ENCODE measurements at regions of chr11 and their contacts with region 1.

Region 1: DNA sequence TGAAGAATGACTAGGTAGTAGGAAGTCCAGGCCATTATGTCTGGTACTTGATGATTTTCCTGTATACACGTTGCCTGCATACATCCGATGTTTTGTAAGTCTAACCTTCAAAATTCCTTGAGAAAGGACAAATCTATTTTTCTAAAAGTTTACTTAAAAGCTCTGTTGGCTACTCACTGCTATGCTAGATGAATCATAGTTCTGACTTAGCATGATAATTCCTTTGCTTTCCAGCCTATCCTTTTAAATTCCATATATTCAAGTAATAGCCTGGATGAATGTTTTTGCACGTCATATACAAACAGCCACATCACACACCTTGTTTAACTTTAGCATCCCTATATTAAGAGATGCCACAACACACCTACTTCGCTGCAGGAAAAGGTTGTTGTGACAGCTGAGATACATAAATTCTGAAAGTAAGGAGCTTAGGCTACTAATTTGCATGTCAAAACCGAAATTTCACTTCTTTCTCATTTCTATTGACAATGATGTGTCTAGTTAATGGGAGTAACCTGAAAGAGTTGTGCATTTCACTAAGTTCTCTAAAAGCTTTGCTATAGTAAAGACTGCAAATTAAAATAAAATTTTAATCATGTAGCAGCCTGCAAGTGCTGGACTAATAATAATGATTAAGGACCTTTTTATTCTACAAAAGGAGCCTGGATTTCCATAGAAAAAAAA is 1116.4 kb downstream of the JRKL start:
- DNase-seq: no peak
- ATAC-seq: no peak
- H3K4me3 ChIP-seq: no peak overlapping the region
- H3K4me3 Mint-ChIP-seq: no peak overlapping the region
- H3K27ac ChIP-seq: no peak overlapping the region
- H3K27ac Mint-ChIP-seq: no peak overlapping the region
- H3K4me1 ChIP-seq: no peaks in the 10 kb centered on the region
- H3K4me1 Mint-ChIP-seq: no peaks in the 10 kb centered on the region
- H3K27me3 ChIP-seq: no peaks in the 10 kb centered on the region
- H3K27me3 Mint-ChIP-seq: no peaks in the 10 kb centered on the region

Region 2: GRCh38 chr11:97516688-97517087 is 10.5 kb after region 1 on chr11:
- CTCF ChIA-PET with region 1: interaction called in 1 of 2 experiments, 10 read pairs
- POLR2A ChIA-PET with region 1: no interaction called
- DNase-seq: no peak
- ATAC-seq: no peak
- H3K4me3 ChIP-seq: no peak overlapping the region
- H3K4me3 Mint-ChIP-seq: no peak overlapping the region
- H3K27ac ChIP-seq: no peak overlapping the region
- H3K27ac Mint-ChIP-seq: no peak overlapping the region
- H3K4me1 ChIP-seq: no peaks in the 10 kb centered on the region
- H3K4me1 Mint-ChIP-seq: no peaks in the 10 kb centered on the region
- H3K27me3 ChIP-seq: no peaks in the 10 kb centered on the region
- H3K27me3 Mint-ChIP-seq: no peaks in the 10 kb centered on the region